ENCODE measurements at regions of chr16 and their contacts with region 1.

Region 1: DNA sequence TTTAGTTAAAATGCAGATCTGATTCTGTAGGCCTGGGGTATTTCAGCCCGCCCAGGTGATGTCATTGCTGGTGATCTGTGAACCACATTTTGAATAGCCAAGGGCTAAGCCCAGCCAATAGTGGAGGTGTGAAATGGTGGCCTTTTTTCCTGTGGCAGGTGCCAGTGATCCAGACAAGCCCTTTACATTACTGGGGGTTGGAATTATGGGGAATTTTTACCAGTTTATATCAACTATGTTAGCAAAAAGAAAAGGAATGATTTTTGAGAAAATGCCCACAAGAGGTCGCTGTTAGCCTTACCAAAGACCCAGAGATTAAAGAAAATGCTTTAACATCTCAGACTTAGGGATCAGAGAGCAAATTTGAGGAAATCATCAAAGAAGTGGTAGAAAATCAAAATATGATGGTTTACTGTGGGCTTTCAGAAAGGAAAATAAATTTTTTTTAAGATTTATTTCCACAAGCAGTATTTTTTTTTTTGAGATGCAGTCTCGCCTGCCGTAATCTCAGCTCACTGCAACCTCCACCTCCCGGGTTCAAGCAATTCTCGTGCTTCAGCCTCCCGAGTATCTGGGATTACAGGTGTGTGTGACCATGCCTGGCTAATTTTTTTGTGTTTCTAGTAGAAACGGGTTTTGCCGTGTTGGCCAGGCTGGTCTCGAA is 3.9 kb downstream of the VPS35L start:
- DNase-seq: peak; percentile 32
- ATAC-seq: no peak
- H3K4me3 ChIP-seq: no peak overlapping the region
- H3K27ac ChIP-seq: no peak overlapping the region
- H3K4me1 ChIP-seq: peaks cover 10% of the 10 kb centered on the region
- H3K27me3 ChIP-seq: no peaks in the 10 kb centered on the region
- CTCF ChIP-seq: peak; percentile 89

Region 2: GRCh38 chr16:19523648-19524355 is 35.6 kb before region 1 on chr16 and contains the start of gene CCP110:
- CTCF ChIA-PET with region 1: no interaction called
- POLR2A ChIA-PET with region 1: no interaction called
- in situ Hi-C with region 1: no loop called
- intact Hi-C with region 1: no loop called
- DNase-seq: peak; percentile 89
- ATAC-seq: peak; percentile 92
- H3K4me3 ChIP-seq: peak within 1 kb of the TSS; percentile 91 to 93
- H3K27ac ChIP-seq: peak within 1 kb of the TSS; percentile 91
- H3K4me1 ChIP-seq: peaks cover 29% of the 10 kb centered on the region
- H3K27me3 ChIP-seq: no peaks in the 10 kb centered on the region
- CTCF ChIP-seq: no peak
- total RNA-seq, gene CCP110: 31.8 TPM

Region 3: GRCh38 chr16:19548144-19548543 is 11.2 kb before region 1 on chr16:
- CTCF ChIA-PET with region 1: no interaction called
- POLR2A ChIA-PET with region 1: no interaction called
- in situ Hi-C with region 1: no loop called
- intact Hi-C with region 1: no loop called
- DNase-seq: no peak
- ATAC-seq: no peak
- H3K4me3 ChIP-seq: no peak overlapping the region
- H3K27ac ChIP-seq: no peak overlapping the region
- H3K4me1 ChIP-seq: no peaks in the 10 kb centered on the region
- H3K27me3 ChIP-seq: no peaks in the 10 kb centered on the region
- CTCF ChIP-seq: no peak

Region 4: DNA sequence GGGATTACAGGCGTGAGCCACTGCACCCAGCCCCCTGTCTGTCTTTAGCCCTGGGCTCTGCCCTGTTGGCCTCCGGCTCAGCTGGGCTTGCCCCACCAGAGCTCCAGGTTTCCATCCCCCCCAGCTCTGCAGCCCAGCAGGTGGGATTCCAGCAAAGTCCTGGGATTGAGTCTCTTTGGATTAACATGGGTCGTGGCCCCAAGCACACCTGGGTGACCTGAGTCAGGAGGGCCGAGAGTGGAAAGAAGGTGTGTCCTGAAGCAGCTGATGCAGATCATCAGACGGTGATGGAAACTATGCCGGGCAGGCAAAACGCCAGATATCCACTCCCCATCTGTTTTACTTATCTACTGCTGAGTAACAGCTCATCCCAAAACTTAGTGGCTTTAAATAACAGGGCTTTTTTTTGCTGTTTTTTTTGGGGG is 86.2 kb after region 1 on chr16:
- CTCF ChIA-PET with region 1: no interaction called
- POLR2A ChIA-PET with region 1: no interaction called
- in situ Hi-C with region 1: no loop called
- intact Hi-C with region 1: no loop called
- DNase-seq: no peak
- ATAC-seq: no peak
- H3K4me3 ChIP-seq: no peak overlapping the region
- H3K27ac ChIP-seq: no peak overlapping the region
- H3K4me1 ChIP-seq: no peaks in the 10 kb centered on the region
- H3K27me3 ChIP-seq: no peaks in the 10 kb centered on the region
- CTCF ChIP-seq: no peak

Region 5: DNA sequence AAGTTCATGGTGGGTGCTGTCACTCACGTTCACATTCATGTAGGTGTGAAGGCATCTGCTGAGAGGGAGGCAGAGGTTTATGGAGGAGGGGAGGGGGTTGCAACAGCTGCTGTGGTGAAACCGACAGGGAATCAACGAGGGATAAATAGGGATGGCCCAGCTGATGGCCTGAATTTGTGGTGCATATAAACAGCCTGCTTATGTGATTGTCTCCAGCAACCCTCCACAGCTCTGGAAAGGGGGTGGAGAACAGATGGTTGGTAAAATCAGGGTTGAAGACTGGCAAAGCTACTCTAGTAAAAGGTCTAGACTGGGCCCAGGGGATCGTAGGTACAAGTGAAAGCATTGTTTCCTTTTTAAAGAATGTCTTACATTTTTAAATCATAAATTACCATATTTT is 212.4 kb after region 1 on chr16:
- CTCF ChIA-PET with region 1: no interaction called
- POLR2A ChIA-PET with region 1: interaction called, 17 read pairs
- in situ Hi-C with region 1: no loop called
- intact Hi-C with region 1: no loop called
- DNase-seq: no peak
- ATAC-seq: no peak
- H3K4me3 ChIP-seq: no peak overlapping the region
- H3K27ac ChIP-seq: no peak overlapping the region
- H3K4me1 ChIP-seq: no peaks in the 10 kb centered on the region
- H3K27me3 ChIP-seq: no peaks in the 10 kb centered on the region
- CTCF ChIP-seq: no peak